Calu3 (cell line): ENCODE measurements at regions of chr3 and their contacts with region 1.

Region 1: DNA sequence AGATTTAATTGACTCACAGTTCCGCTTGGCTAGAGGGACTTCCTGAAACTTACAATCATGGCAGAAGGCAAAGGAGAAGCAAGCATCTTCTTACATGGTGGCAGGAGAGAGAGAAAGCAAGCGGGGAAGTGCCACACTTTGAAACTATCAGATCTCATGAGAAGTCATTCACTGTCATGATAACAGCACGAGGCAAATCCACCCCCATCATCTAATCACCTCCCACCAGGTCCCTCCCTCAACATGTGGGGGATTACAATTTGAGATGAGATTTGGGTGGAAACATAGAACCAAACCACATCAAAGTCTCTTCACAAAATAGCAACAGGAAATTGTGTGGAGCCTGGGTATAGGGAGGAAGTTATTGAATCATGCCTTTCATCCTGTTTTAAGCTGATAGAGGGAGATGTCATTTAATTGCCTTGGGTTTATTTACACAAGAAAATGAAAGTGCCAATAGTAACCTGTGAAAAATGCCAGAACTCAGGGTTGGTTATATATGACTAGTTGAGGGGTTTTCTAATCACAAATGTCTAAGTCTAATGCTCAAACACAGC is 624.8 kb upstream of the LMCD1 start:
- DNase-seq: peak; percentile 2
- H3K4me3 Mint-ChIP-seq: no peak overlapping the region
- H3K27ac Mint-ChIP-seq: peak overlapping the region; percentile 70
- H3K4me1 Mint-ChIP-seq: peaks cover 32% of the 10 kb centered on the region
- H3K27me3 Mint-ChIP-seq: no peaks in the 10 kb centered on the region
- CTCF ChIP-seq: no peak

Region 2: GRCh38 chr3:7800006-7800780 is 76.6 kb before region 1 on chr3:
- CTCF ChIA-PET with region 1: no interaction called
- intact Hi-C with region 1: loop called (anchors 5 kb)
- DNase-seq: no peak
- H3K4me3 Mint-ChIP-seq: no peak overlapping the region
- H3K27ac Mint-ChIP-seq: no peak overlapping the region
- H3K4me1 Mint-ChIP-seq: no peaks in the 10 kb centered on the region
- H3K27me3 Mint-ChIP-seq: no peaks in the 10 kb centered on the region
- CTCF ChIP-seq: no peak